ENCODE measurements at regions of chr1 and their contacts with region 1.

Region 1: DNA sequence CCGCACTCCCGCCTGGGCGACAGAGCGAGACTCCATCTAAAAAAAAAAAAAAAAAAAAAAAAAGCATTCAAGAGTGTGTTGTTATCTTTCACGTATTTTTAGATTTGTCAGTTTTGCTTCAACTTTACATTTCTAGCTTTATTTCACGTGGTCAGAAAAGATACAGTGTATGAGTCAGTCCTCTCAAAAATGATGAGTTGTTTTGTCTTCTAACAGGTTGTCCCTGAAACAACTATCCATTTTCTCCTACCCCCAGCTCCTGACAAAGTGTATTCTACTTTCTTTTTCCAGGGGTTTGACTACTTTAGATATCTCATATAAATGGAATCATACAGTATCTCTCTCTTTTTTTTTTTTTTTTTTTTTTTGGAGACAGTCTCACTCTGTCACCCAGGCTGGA is 5.5 kb upstream of the ZNF695 start:
- DNase-seq: no peak
- H3K4me3 ChIP-seq: no peak overlapping the region
- H3K27ac ChIP-seq: no peak overlapping the region
- H3K27me3 ChIP-seq: no peaks in the 10 kb centered on the region
- CTCF ChIP-seq: no peak

Region 2: DNA sequence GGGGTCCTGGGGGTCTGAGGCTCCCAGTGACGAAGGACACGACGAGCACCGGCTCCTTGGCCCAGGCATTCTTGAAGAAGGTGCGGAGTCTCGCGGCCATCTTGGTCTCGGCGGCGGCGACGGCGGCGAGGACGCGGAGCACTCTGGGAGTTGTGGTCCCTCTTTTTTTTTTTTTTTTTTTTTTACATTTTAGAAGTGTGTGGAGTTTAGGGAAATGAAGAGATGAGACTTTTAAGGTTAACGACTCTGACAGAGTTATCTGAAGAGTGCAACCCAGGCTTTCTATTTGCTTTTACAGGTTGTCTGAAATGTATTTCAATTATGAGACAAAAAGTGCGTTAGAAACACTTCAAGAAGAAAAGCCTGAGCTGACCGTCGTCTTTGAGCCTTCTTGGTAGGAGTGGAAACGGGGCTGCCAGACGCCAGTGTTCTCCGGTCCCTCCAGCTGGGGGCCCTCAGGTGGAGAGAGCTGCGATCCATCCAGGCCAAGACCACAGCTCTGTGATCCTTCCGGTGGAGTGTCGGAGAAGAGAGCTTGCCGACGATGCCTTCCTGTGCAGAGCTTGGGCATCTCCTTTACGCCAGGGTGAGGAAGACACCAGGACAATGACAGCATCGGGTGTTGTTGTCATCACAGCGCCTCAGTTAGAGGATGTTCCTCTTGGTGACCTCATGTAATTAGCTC is 434.9 kb after region 1 on chr1:
- CTCF ChIA-PET with region 1: no interaction called
- POLR2A ChIA-PET with region 1: interaction called, 10 read pairs
- DNase-seq: no peak
- H3K4me3 ChIP-seq: peak overlapping the region; percentile 56
- H3K27ac ChIP-seq: no peak overlapping the region
- H3K27me3 ChIP-seq: no peaks in the 10 kb centered on the region
- CTCF ChIP-seq: no peak; the same call in 1 of the 2 replicates